Heart left ventricle (tissue), 16 donors: ENCODE measurements at regions of chr4 and their contacts with region 1.

Region 1: GRCh38 chr4:8315435-8316250 is 46.1 kb downstream of the HTRA3 start:
- DNase-seq: peak in 3 of 5 donors; percentile 35 to 63 (median 57)
- ATAC-seq: peak in 3 of 4 donors; percentile 34 to 56 (median 40)
- H3K4me3 ChIP-seq: no peak overlapping the region
- H3K27ac ChIP-seq: peak overlapping the region in 9 of 12 donors; percentile 18 to 73 (median 49)
- H3K4me1 ChIP-seq: peaks cover 6 to 43% (median 19%) of the 10 kb centered on the region in 12 donors
- H3K27me3 ChIP-seq: no peaks in the 10 kb centered on the region
- CTCF ChIP-seq: no peak
- POLR2A ChIP-seq: no peak

Region 2: DNA sequence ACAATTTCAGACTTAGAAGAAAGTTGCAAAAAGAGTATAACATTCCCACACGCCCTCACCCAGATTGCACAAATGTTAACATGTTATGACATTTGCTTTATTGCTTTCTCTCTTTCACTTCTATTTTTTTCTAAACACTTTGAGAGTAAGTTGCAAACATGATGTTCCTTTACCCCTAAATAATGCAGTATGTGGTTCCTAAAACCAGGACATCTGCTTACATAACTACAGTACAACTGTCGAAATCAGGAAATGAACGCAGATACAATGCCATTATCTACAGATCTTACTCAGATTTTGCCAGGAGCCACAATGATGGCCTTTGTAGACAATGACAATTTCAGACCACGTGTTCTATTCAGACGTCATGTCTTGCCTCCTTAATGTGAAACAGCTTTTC is 94.2 kb before region 1 on chr4:
- intact Hi-C with region 1: no loop called
- DNase-seq: no peak
- ATAC-seq: peak; percentile 24 to 70 (median 54)
- H3K4me3 ChIP-seq: no peak overlapping the region
- H3K27ac ChIP-seq: peak overlapping the region in 2 of 12 donors; percentile 57 to 87
- H3K4me1 ChIP-seq: peaks cover 0 to 37% (median 0%) of the 10 kb centered on the region in 12 donors
- H3K27me3 ChIP-seq: no peaks in the 10 kb centered on the region
- CTCF ChIP-seq: no peak
- POLR2A ChIP-seq: no peak

Region 3: DNA sequence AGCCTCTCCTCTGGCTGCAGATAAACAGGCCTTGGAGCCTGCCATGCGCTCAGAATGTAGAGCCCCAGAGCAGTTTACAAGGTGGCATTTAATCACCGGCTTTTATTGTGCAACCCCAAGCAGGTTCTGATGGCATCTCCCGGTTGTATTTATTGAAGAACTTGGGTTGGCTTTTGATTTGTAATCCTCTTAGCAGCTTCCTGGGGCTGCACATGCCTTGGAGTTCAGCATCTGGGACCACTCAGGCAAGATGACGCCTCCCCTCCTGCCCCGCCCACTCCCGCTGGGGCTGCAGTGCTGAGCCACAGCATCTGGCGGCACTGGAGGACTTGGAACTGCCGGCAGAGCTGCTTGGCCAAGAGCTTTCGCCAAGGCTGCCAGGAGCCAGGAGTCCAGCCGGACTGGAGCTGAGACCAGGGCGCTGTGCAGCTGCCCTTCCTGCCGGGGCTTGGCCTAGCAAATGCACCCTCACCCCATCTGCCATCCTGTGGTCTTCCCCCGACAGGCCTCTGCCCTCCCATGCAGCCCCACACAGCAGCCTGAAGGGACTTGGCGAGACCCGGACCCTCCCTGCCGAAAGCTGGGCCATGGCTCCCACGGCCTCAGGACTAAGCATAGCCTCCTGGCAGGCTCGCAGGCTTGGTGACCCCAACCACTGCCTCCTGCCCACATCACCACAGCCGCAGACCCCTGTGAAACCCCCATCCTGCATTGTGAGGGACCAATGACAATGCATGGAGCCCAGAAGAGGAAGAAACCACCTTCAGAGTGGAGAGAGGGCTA is 40.7 kb before region 1 on chr4:
- intact Hi-C with region 1: loop called in 3 of 10 experiments (anchors 5 kb)
- DNase-seq: peak; percentile 86 to 94 (median 93)
- ATAC-seq: peak; percentile 70 to 80 (median 74)
- H3K4me3 ChIP-seq: no peak overlapping the region
- H3K27ac ChIP-seq: peak overlapping the region in 11 of 12 donors; percentile 37 to 83 (median 69)
- H3K4me1 ChIP-seq: peaks cover 0 to 94% (median 80%) of the 10 kb centered on the region in 12 donors
- H3K27me3 ChIP-seq: no peaks in the 10 kb centered on the region
- CTCF ChIP-seq: peak in 10 of 12 donors; percentile 16 to 65 (median 39)
- POLR2A ChIP-seq: no peak

Region 4: DNA sequence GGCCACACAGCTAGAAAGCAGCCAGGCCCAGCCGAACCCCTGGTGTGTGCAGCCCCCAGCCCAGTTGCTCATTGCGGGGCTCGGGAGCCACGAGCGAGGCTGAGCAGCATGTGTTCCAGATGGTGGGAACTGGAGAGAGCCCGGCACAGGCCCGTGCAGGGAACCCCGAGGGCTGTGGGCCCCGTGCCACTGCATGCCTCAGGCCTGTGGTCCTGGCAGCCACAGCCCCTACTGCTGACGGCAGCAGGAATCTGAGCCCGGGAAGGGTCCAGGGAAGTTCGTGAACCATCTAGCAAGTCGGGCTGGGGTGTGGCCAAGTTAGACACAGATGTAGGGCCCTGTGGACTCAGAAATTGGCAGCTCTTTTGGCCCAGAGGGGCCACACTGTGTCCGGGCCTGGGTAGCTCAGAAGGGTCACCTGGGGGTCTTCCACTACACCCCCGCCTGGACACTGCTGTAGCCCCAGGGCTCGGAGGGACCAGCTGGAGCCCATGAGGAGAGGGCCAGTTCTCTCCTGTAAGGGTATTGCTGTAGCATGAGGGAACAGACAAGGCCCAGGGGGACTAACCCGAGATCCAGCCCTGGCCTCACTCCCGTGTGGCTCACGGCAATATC is 34.0 kb before region 1 on chr4:
- intact Hi-C with region 1: loop called in 5 of 10 experiments (anchors 1 to 5 kb)
- DNase-seq: peak; percentile 66 to 91 (median 86)
- ATAC-seq: peak; percentile 55 to 73 (median 60)
- H3K4me3 ChIP-seq: no peak overlapping the region
- H3K27ac ChIP-seq: peak overlapping the region in 9 of 12 donors; percentile 15 to 62 (median 47)
- H3K4me1 ChIP-seq: peaks cover 0 to 68% (median 39%) of the 10 kb centered on the region in 12 donors
- H3K27me3 ChIP-seq: no peaks in the 10 kb centered on the region
- CTCF ChIP-seq: no peak
- POLR2A ChIP-seq: no peak

Region 5: GRCh38 chr4:8287343-8288280 is 28.0 kb before region 1 on chr4:
- intact Hi-C with region 1: loop called in 3 of 10 experiments (anchors 1 to 5 kb)
- DNase-seq: peak in 4 of 5 donors; percentile 6 to 40 (median 22)
- ATAC-seq: no peak
- H3K4me3 ChIP-seq: no peak overlapping the region
- H3K27ac ChIP-seq: peak overlapping the region in 3 of 12 donors; percentile 23 to 84 (median 79)
- H3K4me1 ChIP-seq: peaks cover 0 to 24% (median 10%) of the 10 kb centered on the region in 12 donors
- H3K27me3 ChIP-seq: no peaks in the 10 kb centered on the region
- CTCF ChIP-seq: no peak
- POLR2A ChIP-seq: no peak

Region 6: GRCh38 chr4:8383451-8384160 is 68.0 kb after region 1 on chr4:
- intact Hi-C with region 1: loop called in 1 of 10 experiments (anchors 10 kb)
- DNase-seq: peak in 1 of 5 donors; percentile 31
- ATAC-seq: no peak
- H3K4me3 ChIP-seq: no peak overlapping the region
- H3K27ac ChIP-seq: peak overlapping the region in 5 of 12 donors; percentile 6 to 53 (median 28)
- H3K4me1 ChIP-seq: peaks cover 0 to 52% (median 16%) of the 10 kb centered on the region in 12 donors
- H3K27me3 ChIP-seq: no peaks in the 10 kb centered on the region
- CTCF ChIP-seq: no peak
- POLR2A ChIP-seq: no peak

Region 7: DNA sequence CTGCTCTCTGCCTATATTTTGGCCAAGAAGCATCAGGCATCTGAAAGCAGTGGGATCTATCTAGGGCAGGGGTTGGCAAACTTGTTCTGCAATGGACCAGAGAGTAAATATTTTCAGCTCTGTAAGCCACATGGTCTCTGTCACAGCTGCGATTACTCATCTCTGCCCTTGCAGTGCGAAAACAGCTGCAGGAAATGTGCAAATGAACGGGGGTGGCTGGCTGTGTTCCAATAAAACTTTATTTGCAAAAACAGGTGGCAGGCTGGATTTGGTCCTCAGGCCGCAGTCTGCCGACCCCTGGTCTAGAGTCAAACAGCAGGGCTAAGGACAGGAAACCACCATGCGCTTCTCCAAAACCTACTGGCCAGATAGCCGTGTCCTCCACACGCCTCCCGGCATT is 76.3 kb after region 1 on chr4:
- intact Hi-C with region 1: loop called in 2 of 10 experiments (anchors 5 to 10 kb)
- DNase-seq: peak; percentile 69 to 77 (median 75)
- ATAC-seq: peak in 3 of 4 donors; percentile 31 to 45 (median 42)
- H3K4me3 ChIP-seq: no peak overlapping the region
- H3K27ac ChIP-seq: peak overlapping the region in 7 of 12 donors; percentile 14 to 94 (median 75)
- H3K4me1 ChIP-seq: peaks cover 0 to 42% (median 30%) of the 10 kb centered on the region in 12 donors
- H3K27me3 ChIP-seq: no peaks in the 10 kb centered on the region
- CTCF ChIP-seq: peak in 1 of 12 donors; percentile 31
- POLR2A ChIP-seq: no peak